T-cell (primary cell): ENCODE measurements at regions of chr6 and their contacts with region 1.

Region 1: GRCh38 chr6:136282906-136283305 is 6.7 kb downstream of the BCLAF1 start:
- DNase-seq: peak in 1 of 35 experiments; percentile 22
- ATAC-seq: peak in 1 of 4 experiments; percentile 37
- H3K4me3 ChIP-seq: peak overlapping the region in 1 of 2 donors; percentile 10
- H3K4me3 Mint-ChIP-seq: peak overlapping the region; percentile 68 to 98 (median 70)
- H3K27ac ChIP-seq: peak overlapping the region; percentile 41
- H3K27ac Mint-ChIP-seq: peak overlapping the region in 1 of 2 donors; percentile 66
- H3K4me1 ChIP-seq: peaks cover 34 to 53% of the 10 kb centered on the region in 2 experiments
- H3K4me1 Mint-ChIP-seq: peaks cover 82 to 90% (median 87%) of the 10 kb centered on the region in 3 donors
- H3K27me3 ChIP-seq: no peaks in the 10 kb centered on the region
- H3K27me3 Mint-ChIP-seq: no peaks in the 10 kb centered on the region

Region 2: GRCh38 chr6:136262940-136263339 is 20.0 kb before region 1 on chr6:
- CTCF ChIA-PET with region 1: interaction called in 1 of 2 experiments, 3 read pairs
- POLR2A ChIA-PET with region 1: interaction called, 8 to 14 read pairs
- DNase-seq: no peak
- ATAC-seq: peak in 1 of 4 experiments; percentile 18
- H3K4me3 ChIP-seq: no peak overlapping the region
- H3K4me3 Mint-ChIP-seq: no peak overlapping the region
- H3K27ac ChIP-seq: no peak overlapping the region
- H3K27ac Mint-ChIP-seq: no peak overlapping the region
- H3K4me1 ChIP-seq: no peaks in the 10 kb centered on the region
- H3K4me1 Mint-ChIP-seq: peaks cover 36 to 45% (median 37%) of the 10 kb centered on the region in 3 donors
- H3K27me3 ChIP-seq: no peaks in the 10 kb centered on the region
- H3K27me3 Mint-ChIP-seq: no peaks in the 10 kb centered on the region

Region 3: GRCh38 chr6:136326038-136326553 is 43.2 kb after region 1 on chr6:
- CTCF ChIA-PET with region 1: no interaction called
- POLR2A ChIA-PET with region 1: no interaction called
- DNase-seq: no peak
- ATAC-seq: no peak
- H3K4me3 ChIP-seq: no peak overlapping the region
- H3K4me3 Mint-ChIP-seq: no peak overlapping the region
- H3K27ac ChIP-seq: no peak overlapping the region
- H3K27ac Mint-ChIP-seq: no peak overlapping the region
- H3K4me1 ChIP-seq: no peaks in the 10 kb centered on the region
- H3K4me1 Mint-ChIP-seq: no peaks in the 10 kb centered on the region
- H3K27me3 ChIP-seq: peaks cover 0 to 3% of the 10 kb centered on the region in 2 experiments
- H3K27me3 Mint-ChIP-seq: no peaks in the 10 kb centered on the region

Region 4: DNA sequence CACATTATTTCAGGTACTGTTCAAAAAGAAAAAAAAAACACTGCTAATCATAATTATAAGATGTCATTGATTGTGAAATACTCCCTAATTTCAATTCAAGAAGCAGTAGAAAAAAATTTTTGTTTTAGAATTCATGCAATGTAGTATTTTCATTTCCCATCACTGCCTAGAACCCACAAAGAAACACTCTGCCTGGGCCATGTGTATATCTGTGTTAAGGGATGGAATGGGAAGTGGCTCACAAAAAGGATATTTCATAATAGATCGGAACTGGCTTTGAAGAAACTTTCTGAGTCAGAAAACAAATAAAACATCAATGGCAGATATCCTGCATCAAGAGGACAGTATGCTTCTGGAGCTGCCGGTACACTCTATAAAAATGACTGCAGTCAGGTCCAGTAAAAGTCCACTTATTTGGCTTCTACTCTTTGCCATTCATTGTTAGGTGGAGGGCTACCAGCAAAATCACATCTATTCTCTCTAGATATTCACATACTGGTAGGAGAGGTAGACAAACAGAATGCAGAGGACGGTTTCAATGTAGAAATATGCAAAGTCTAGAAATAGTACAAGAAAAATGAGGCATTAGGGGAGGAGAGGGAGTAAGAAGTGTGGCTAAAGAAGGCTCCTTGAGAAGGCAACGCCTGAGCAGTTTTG is 1449.2 kb after region 1 on chr6:
- CTCF ChIA-PET with region 1: no interaction called
- POLR2A ChIA-PET with region 1: interaction called in 1 of 2 experiments, 14 read pairs
- DNase-seq: no peak
- ATAC-seq: no peak
- H3K4me3 ChIP-seq: no peak overlapping the region
- H3K4me3 Mint-ChIP-seq: no peak overlapping the region
- H3K27ac ChIP-seq: no peak overlapping the region
- H3K27ac Mint-ChIP-seq: no peak overlapping the region
- H3K4me1 ChIP-seq: peaks cover 7 to 9% of the 10 kb centered on the region in 2 experiments
- H3K4me1 Mint-ChIP-seq: peaks cover 10 to 19% (median 14%) of the 10 kb centered on the region in 3 donors
- H3K27me3 ChIP-seq: no peaks in the 10 kb centered on the region
- H3K27me3 Mint-ChIP-seq: peaks cover 2 to 10% of the 10 kb centered on the region in 2 donors

Region 5: GRCh38 chr6:137951064-137951597 is 1668.2 kb after region 1 on chr6:
- CTCF ChIA-PET with region 1: no interaction called
- POLR2A ChIA-PET with region 1: no interaction called
- DNase-seq: no peak
- ATAC-seq: no peak
- H3K4me3 ChIP-seq: no peak overlapping the region
- H3K4me3 Mint-ChIP-seq: no peak overlapping the region
- H3K27ac ChIP-seq: peak overlapping the region; percentile 74
- H3K27ac Mint-ChIP-seq: no peak overlapping the region
- H3K4me1 ChIP-seq: peaks cover 7 to 9% of the 10 kb centered on the region in 2 experiments
- H3K4me1 Mint-ChIP-seq: peaks cover 12 to 19% (median 14%) of the 10 kb centered on the region in 3 donors
- H3K27me3 ChIP-seq: no peaks in the 10 kb centered on the region
- H3K27me3 Mint-ChIP-seq: no peaks in the 10 kb centered on the region